Activated B cell treated with CpG ODN at 0.5 μM for 24 hours (primary cell): ENCODE measurements at regions of chr3 and their contacts with region 1.

Region 1: DNA sequence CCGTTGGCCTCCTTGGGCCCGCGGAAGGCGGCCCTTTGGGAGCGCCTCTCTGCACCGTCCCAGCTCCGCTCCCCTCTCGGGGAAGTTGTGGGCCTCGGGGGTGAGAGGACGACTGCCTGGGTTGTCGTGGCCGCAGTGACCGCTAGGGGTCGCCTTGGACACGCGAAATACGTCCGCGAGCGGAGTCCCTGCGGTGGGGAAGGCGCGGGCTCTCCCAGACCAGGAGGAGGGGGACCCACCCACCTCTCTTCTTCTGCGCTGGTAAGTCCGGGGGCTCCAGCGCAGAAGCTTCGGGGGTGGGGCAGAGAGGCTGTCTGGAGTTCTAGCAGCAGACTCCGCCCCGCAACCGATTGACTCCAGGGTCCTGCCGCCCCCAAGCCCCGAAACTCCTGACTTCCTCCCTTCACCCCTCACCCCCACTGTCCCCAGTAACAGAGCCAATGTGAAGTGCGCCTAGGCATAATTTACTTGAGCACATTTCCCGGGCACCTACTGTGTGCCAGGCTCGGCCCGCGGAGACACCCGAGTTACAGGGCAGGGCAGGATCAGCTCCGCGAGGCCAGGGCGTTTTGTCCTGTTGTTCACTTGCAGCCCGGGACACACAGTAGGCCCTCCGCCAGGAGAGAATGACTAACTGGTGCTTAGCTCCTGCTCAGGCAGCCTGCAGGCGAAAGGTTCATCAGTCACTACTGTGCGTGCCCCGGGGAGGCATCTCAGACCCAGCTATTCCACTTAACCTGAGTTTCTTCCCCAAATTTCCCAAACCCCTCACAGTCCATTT is 32.8 kb downstream of the DNASE1L3 start:
- DNase-seq: peak; percentile 91
- ATAC-seq: peak; percentile 96
- H3K4me3 Mint-ChIP-seq: peak overlapping the region; percentile 81
- H3K27ac Mint-ChIP-seq: no peak overlapping the region
- H3K4me1 Mint-ChIP-seq: peaks cover 24% of the 10 kb centered on the region
- H3K27me3 Mint-ChIP-seq: no peaks in the 10 kb centered on the region
- CTCF ChIP-seq: peak; percentile 27

Region 2: GRCh38 chr3:57397175-57398026 is 780.5 kb before region 1 on chr3:
- CTCF ChIA-PET with region 1: no interaction called
- POLR2A ChIA-PET with region 1: no interaction called
- intact Hi-C with region 1: loop called (anchors 5 kb)
- DNase-seq: peak; percentile 17
- ATAC-seq: peak; percentile 98
- H3K4me3 Mint-ChIP-seq: no peak overlapping the region
- H3K27ac Mint-ChIP-seq: peak overlapping the region; percentile 43
- H3K4me1 Mint-ChIP-seq: peaks cover 16% of the 10 kb centered on the region
- H3K27me3 Mint-ChIP-seq: peaks cover 3% of the 10 kb centered on the region
- CTCF ChIP-seq: peak; percentile 79

Region 3: DNA sequence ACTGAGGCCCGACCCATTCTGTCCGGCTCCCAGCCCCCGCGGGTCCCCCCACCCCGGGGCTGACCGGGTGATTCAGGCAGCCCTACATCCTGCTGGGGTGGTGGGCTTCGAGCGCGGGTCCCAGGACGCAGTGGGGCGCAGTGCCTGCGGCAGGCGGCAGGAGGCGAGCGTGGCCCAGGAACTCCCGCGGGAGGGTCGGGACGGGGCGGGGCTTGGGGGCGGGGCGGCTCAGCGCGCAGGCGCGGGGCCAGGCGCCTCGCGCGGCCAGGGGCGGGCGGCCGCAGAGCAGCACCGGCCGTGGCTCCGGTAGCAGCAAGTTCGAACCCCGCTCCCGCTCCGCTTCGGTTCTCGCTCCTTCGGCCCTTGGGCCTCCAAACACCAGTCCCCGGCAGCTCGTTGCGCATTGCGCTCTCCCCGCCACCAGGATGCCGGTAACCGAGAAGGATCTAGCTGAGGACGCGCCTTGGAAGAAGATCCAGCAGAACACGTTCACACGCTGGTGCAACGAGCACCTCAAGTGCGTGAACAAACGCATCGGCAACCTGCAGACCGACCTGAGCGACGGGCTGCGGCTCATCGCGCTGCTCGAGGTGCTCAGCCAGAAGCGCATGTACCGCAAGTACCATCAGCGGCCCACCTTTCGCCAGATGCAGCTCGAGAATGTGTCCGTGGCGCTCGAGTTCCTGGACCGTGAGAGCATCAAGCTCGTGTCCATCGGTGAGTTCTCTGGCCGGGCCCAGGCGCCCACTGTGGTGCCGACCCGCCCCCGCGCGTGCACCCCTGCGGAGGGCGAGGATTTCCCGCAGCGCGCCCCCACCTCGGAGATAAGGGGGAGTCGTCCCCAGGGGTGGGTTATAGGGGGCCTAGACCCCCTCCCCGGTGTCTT is 169.6 kb before region 1 on chr3 and contains the start of gene FLNB:
- CTCF ChIA-PET with region 1: interaction called, 9 read pairs
- POLR2A ChIA-PET with region 1: interaction called, 4 read pairs
- intact Hi-C with region 1: loop called (anchors 1 kb)
- DNase-seq: peak; percentile 72
- ATAC-seq: peak; percentile 93
- H3K4me3 Mint-ChIP-seq: peak within 1 kb of the TSS; percentile 95
- H3K27ac Mint-ChIP-seq: peak within 1 kb of the TSS; percentile 73
- H3K4me1 Mint-ChIP-seq: peaks cover 16% of the 10 kb centered on the region
- H3K27me3 Mint-ChIP-seq: no peaks in the 10 kb centered on the region
- CTCF ChIP-seq: no peak
- total RNA-seq, gene FLNB: 13.4 and 16.7 TPM in 2 replicates

Region 4: GRCh38 chr3:58200846-58201355 is 23.0 kb after region 1 on chr3:
- CTCF ChIA-PET with region 1: interaction called, 3 read pairs
- POLR2A ChIA-PET with region 1: interaction called, 10 read pairs
- intact Hi-C with region 1: no loop called
- DNase-seq: no peak
- ATAC-seq: no peak
- H3K4me3 Mint-ChIP-seq: peak overlapping the region; percentile 64
- H3K27ac Mint-ChIP-seq: peak overlapping the region; percentile 70
- H3K4me1 Mint-ChIP-seq: peaks cover 66% of the 10 kb centered on the region
- H3K27me3 Mint-ChIP-seq: no peaks in the 10 kb centered on the region
- CTCF ChIP-seq: no peak

Region 5: DNA sequence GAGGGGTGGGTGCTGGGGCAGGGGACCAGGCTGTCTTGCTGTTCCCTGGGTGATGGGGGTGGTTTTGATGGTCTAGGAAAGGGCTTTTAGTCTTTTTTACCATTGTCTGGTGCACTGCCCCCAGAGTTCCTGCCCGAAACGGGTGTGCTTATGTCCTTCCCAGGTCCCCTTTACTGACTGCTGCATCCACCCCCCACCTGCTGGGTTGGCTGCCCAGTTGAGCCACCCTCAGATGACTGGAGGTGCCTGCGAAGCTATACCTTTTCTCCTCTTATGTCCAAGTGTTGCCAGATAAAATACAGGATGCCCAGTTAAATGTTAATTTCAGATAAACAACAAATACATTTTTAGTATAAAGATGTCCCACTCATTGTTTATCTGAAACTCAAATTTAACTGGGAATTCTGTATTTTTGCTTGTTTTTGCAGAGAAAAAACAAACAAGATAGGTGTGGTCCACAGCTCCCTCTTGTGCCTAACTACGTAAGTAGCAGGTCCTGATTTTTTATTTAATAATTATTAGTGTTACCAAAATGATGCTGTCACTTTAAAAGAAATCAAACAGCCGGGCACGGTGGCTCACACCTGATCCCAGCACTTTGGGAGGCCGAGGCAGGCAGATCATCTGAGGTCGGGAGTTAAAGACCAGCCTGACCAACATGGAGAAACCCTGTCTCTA is 122.0 kb after region 1 on chr3:
- CTCF ChIA-PET with region 1: interaction called, 46 read pairs
- POLR2A ChIA-PET with region 1: interaction called, 6 read pairs
- intact Hi-C with region 1: loop called (anchors 1 kb)
- DNase-seq: no peak
- ATAC-seq: peak; percentile 58
- H3K4me3 Mint-ChIP-seq: no peak overlapping the region
- H3K27ac Mint-ChIP-seq: no peak overlapping the region
- H3K4me1 Mint-ChIP-seq: peaks cover 1% of the 10 kb centered on the region
- H3K27me3 Mint-ChIP-seq: peaks cover 3% of the 10 kb centered on the region
- CTCF ChIP-seq: no peak

Region 6: DNA sequence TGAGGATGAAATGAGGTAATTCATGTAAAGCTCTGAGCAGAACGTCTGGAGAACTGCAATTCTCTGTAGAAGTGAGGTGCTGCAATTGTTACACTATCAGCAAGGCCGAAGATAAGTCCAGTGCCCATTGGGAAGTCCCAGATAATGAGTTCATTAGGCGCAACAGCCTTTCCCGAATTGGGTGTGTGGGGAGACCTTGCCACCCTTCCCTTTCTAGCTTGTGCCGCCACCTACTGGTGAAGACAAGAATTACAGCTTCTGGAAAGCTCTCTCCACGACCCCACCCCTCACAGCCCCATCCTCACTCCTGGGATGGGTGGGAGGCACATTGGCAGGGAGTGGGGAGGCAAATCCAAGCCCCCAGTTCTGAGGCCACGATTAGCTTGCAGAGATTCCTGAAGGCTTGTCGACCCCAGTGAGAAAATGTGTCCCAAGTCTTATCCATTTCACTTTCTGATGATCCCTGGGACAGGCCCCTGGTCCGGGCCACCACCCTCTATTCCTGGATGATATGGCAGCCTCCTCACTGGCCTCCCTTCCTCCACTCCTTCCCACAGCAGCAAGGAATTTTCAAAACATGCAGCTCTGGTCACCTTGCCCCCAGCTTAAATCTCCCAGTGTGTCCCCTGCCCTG is 452.3 kb after region 1 on chr3:
- CTCF ChIA-PET with region 1: interaction called, 12 read pairs
- POLR2A ChIA-PET with region 1: no interaction called
- intact Hi-C with region 1: loop called (anchors 2 kb)
- DNase-seq: peak; percentile 29
- ATAC-seq: peak; percentile 76
- H3K4me3 Mint-ChIP-seq: no peak overlapping the region
- H3K27ac Mint-ChIP-seq: no peak overlapping the region
- H3K4me1 Mint-ChIP-seq: peaks cover 1% of the 10 kb centered on the region
- H3K27me3 Mint-ChIP-seq: peaks cover 5% of the 10 kb centered on the region
- CTCF ChIP-seq: peak; percentile 96